BJ (cell line): ENCODE measurements at regions of chr16 and their contacts with region 1.

Region 1: GRCh38 chr16:2854700-2855309 is 3.2 kb downstream of the PRSS22 start:
- DNase-seq: no peak
- H3K4me3 ChIP-seq: no peak overlapping the region
- H3K27me3 ChIP-seq: peaks cover 13% of the 10 kb centered on the region
- CTCF ChIP-seq: peak; percentile 49

Region 2: DNA sequence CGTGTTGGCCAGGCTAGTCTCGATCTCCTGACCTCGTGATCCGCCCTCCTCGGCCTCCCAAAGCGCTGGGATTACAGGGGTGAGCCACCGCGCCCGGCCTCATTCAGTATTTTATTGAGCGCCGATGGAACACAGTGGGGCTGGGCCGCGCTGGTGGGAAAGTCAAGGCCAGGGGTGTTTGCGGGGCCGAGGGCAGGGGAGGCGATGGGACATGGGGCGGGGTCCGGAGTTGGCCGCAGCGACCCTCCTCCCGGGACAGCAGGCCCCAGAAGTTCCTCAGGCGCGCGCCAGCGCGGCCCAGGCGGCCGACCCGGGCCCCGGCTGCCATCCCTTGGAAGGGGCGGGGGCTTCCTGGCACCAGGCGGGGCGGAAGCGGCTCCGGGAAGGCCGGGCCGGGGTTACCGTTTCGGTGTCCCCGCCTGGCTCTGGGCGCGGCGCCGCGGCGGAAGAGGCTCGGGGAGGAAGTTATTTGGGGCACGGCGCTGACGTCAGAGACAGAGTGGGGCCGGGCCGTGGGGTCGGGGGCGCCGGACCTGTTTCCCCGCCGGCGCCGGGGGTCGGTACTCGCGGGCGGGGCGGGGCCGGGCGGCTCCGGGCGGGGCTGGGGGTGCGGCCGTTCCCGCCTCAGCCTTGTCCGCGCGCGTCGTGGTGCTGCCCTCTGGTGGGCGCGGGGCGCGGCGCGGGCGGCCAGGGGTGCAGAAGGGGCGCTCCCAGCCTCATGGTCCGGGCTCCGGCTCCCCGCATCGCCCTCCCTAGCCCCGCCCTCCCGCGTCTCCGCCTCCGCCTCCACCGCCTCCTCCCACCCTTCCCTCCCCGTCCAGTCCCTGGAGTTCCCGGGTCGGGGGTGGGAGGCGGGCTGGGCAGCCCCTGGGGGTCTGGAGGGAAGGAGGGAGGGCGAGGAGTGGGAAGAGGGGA is 133.8 kb before region 1 on chr16:
- CTCF ChIA-PET with region 1: no interaction called
- POLR2A ChIA-PET with region 1: no interaction called
- DNase-seq: peak; percentile 4
- H3K4me3 ChIP-seq: peak overlapping the region; percentile 70
- H3K27me3 ChIP-seq: no peaks in the 10 kb centered on the region
- CTCF ChIP-seq: peak; percentile 23; the same call in 1 of the 2 replicates

Region 3: GRCh38 chr16:2867987-2868789 is 13.4 kb after region 1 on chr16:
- CTCF ChIA-PET with region 1: interaction called, 14 read pairs
- POLR2A ChIA-PET with region 1: no interaction called
- DNase-seq: peak; percentile 64
- H3K4me3 ChIP-seq: peak overlapping the region; percentile 63
- H3K27me3 ChIP-seq: no peaks in the 10 kb centered on the region
- CTCF ChIP-seq: peak; percentile 98